ENCODE measurements at regions of chr6 and their contacts with region 1.

Region 1: DNA sequence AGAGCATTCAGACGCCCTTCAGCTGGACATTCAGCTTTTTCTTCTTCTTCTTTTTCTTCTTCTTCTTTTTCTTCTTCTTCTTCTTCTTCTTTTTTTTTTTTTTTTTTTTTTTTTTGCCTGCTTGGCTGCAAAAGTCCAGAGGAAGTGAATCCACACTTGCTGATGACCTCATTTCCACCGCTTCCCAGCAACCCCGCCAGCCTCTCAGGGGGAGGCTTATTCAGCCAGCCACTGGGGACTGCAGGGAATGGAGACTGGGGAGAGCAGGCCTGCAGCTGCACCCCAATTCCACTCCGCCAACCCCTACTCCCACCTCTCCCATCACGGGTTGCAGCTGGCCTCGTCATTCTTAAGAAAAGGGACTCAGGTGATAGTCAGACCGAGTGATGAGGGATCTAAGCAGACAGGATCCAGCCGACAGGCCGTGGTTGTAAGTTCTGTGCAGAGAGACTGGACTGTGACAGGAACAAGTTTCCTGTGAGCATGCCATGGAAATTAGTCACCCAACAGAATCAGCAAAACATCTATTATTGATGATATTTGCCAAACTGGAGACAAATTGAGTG is 59.0 kb upstream of the QKI start:
- DNase-seq: no peak
- H3K4me3 ChIP-seq: peak overlapping the region in 2 of 4 donors; percentile 24 to 34
- H3K27ac ChIP-seq: peak overlapping the region; percentile 47 to 70 (median 62)
- H3K4me1 ChIP-seq: peaks cover 19 to 27% (median 22%) of the 10 kb centered on the region in 4 donors
- H3K27me3 ChIP-seq: no peaks in the 10 kb centered on the region
- CTCF ChIP-seq: no peak
- EP300 ChIP-seq: no peak
- POLR2A ChIP-seq: no peak

Region 2: GRCh38 chr6:162395181-162395580 is 960.3 kb before region 1 on chr6:
- intact Hi-C with region 1: no loop called
- DNase-seq: no peak
- H3K4me3 ChIP-seq: no peak overlapping the region
- H3K27ac ChIP-seq: no peak overlapping the region
- H3K4me1 ChIP-seq: no peaks in the 10 kb centered on the region
- H3K27me3 ChIP-seq: no peaks in the 10 kb centered on the region
- CTCF ChIP-seq: no peak
- EP300 ChIP-seq: no peak
- POLR2A ChIP-seq: no peak

Region 3: GRCh38 chr6:163405412-163406309 is 50.2 kb after region 1 on chr6:
- intact Hi-C with region 1: loop called (anchors 10 kb)
- DNase-seq: peak; percentile 60
- H3K4me3 ChIP-seq: peak overlapping the region; percentile 38 to 52 (median 48)
- H3K27ac ChIP-seq: peak overlapping the region; percentile 82 to 85 (median 82)
- H3K4me1 ChIP-seq: peaks cover 28 to 32% (median 28%) of the 10 kb centered on the region in 4 donors
- H3K27me3 ChIP-seq: no peaks in the 10 kb centered on the region
- CTCF ChIP-seq: no peak
- EP300 ChIP-seq: no peak
- POLR2A ChIP-seq: no peak